ENCODE measurements at regions of chr6 and their contacts with region 1.

Region 1: DNA sequence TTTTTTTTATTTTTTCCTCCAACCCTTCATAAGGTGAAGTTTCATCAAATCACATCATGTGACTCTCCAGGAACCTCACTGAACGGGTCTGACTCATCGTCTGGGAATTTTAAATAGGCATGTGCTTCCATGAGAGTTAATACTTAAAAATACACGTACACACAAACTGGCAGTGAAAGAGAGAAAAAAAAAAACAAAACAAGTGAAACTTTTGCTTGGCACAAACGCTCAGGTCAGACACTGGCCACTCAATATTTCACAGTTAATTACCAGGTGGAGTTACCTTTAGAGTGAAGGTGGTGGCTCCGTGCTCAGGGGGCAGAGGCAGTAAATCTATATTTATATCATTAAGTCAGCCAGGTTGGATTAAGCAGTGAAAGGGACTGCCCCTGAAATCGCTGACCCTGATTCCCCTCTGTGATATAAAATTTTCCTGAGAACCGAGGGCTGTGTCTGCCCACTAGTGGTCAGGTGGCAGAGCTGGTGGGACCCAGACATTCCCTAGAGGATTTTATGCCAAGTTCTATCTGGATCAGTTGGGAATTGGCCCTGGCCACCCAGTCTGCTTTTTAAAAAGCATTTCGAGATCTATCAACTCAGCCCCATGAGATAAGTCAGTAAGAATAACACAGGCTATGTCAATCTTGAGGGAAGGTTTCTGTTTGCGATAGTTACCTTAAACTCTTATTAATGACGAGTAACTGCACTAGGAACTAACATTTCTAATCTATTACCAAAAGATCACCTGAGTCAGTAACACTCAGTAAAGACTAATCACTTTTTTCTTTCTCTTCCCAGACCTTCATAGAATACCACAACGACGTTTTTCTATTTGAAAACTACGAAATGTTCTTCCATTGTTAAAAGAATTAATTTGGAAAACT is 259.1 kb downstream of the HDGFL1 start:
- DNase-seq: peak; percentile 88
- H3K4me3 Mint-ChIP-seq: peak overlapping the region; percentile 48
- H3K27ac Mint-ChIP-seq: peak overlapping the region; percentile 82
- H3K4me1 Mint-ChIP-seq: peaks cover 68% of the 10 kb centered on the region
- H3K27me3 Mint-ChIP-seq: no peaks in the 10 kb centered on the region
- CTCF ChIP-seq: peak; percentile 95

Region 2: GRCh38 chr6:21731411-21732031 is 1096.9 kb before region 1 on chr6:
- CTCF ChIA-PET with region 1: no interaction called
- intact Hi-C with region 1: loop called (anchors 5 kb)
- DNase-seq: peak; percentile 74
- H3K4me3 Mint-ChIP-seq: no peak overlapping the region
- H3K27ac Mint-ChIP-seq: peak overlapping the region; percentile 22
- H3K4me1 Mint-ChIP-seq: peaks cover 62% of the 10 kb centered on the region
- H3K27me3 Mint-ChIP-seq: no peaks in the 10 kb centered on the region
- CTCF ChIP-seq: no peak

Region 3: GRCh38 chr6:21946298-21946783 is 882.1 kb before region 1 on chr6:
- CTCF ChIA-PET with region 1: no interaction called
- intact Hi-C with region 1: loop called (anchors 1 kb)
- DNase-seq: peak; percentile 54
- H3K4me3 Mint-ChIP-seq: no peak overlapping the region
- H3K27ac Mint-ChIP-seq: peak overlapping the region; percentile 79
- H3K4me1 Mint-ChIP-seq: peaks cover 85% of the 10 kb centered on the region
- H3K27me3 Mint-ChIP-seq: no peaks in the 10 kb centered on the region
- CTCF ChIP-seq: no peak

Region 4: DNA sequence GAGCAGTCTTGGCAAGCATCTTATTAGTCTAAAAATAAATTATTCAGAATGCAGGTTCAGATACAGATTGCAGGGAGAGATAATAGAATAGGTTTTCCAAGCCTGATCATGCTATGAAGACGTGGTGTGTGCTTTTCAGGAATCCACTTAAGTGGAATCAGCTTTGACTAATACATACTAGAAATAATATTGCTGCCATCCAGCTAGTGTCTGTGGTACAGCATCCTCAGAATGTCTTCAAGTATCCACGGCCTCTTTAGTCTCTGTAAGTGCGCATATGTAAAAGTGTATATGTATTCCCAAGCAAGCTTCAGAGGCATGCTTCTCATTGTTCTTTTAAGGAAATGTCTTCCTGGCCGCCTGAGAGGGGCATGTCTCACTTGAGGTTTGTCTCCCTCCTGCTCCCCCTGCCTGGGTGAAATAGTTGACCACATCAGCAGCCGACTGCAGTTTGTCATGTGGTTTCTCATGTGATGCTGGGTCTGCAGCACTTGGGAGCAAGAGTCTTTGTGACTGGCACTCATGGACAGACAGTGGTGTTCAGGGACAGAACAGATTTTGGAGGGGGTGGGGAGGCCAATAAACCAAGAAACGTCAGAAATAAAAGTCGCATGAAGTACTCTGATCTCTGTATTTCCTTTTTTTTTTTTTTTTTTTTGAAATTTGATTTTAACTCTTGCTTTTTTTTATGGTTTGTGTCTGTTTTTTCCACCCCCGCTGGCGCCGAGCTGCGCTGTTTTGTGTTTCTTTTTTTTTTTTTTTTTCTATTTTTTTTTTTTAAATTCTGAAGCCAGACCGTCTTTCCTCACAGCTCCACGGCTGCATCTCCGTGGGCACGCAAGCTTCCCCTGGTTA is 682.4 kb before region 1 on chr6:
- CTCF ChIA-PET with region 1: interaction called, 3 read pairs
- intact Hi-C with region 1: loop called (anchors 10 kb)
- DNase-seq: no peak
- H3K4me3 Mint-ChIP-seq: no peak overlapping the region
- H3K27ac Mint-ChIP-seq: no peak overlapping the region
- H3K4me1 Mint-ChIP-seq: peaks cover 20% of the 10 kb centered on the region
- H3K27me3 Mint-ChIP-seq: no peaks in the 10 kb centered on the region
- CTCF ChIP-seq: no peak

Region 5: GRCh38 chr6:22363714-22364239 is 464.6 kb before region 1 on chr6:
- CTCF ChIA-PET with region 1: interaction called, 3 read pairs
- intact Hi-C with region 1: loop called (anchors 10 kb)
- DNase-seq: no peak
- H3K4me3 Mint-ChIP-seq: no peak overlapping the region
- H3K27ac Mint-ChIP-seq: peak overlapping the region; percentile 83
- H3K4me1 Mint-ChIP-seq: peaks cover 26% of the 10 kb centered on the region
- H3K27me3 Mint-ChIP-seq: no peaks in the 10 kb centered on the region
- CTCF ChIP-seq: no peak

Region 6: GRCh38 chr6:22848121-22848520 is 19.7 kb after region 1 on chr6:
- CTCF ChIA-PET with region 1: no interaction called
- intact Hi-C with region 1: no loop called
- DNase-seq: no peak
- H3K4me3 Mint-ChIP-seq: no peak overlapping the region
- H3K27ac Mint-ChIP-seq: no peak overlapping the region
- H3K4me1 Mint-ChIP-seq: no peaks in the 10 kb centered on the region
- H3K27me3 Mint-ChIP-seq: no peaks in the 10 kb centered on the region
- CTCF ChIP-seq: no peak

Region 7: DNA sequence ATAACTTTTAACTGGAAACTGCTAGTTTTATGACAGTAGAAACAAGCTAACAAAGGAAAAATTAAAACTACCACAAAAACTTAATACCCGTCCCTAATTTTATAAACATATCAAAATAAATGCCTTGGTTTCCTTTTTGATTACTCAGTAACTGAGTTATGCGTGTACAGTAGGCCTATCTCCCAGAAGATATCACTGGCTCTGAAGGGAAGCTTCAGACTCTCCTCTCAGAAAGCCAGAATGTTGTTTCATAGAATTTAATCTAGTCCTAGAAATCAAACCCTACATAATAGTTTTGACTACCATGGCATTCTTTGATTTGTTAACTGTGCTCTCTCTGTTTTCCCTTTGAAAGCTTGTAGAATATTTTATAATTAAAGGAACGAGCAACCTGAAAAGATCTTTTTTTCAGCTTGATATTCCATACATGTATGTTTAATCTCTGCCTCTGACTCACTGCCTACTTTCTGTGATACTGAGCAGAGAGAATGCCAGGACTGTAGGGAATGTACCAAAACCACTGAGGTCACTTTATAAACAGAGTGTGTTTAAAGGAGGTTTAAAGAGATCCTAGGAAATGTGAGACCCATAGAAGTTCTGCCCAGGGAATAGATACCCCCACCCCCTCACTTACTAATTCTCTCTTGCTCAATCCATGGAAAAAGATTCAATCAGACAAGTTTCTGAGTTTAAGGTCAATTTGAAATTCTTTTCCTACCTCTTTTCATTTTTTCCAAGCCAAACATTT is 52.4 kb after region 1 on chr6:
- CTCF ChIA-PET with region 1: interaction called, 4 read pairs
- intact Hi-C with region 1: loop called (anchors 2 kb)
- DNase-seq: peak; percentile 51
- H3K4me3 Mint-ChIP-seq: peak overlapping the region; percentile 24
- H3K27ac Mint-ChIP-seq: peak overlapping the region; percentile 95
- H3K4me1 Mint-ChIP-seq: peaks cover 61% of the 10 kb centered on the region
- H3K27me3 Mint-ChIP-seq: no peaks in the 10 kb centered on the region
- CTCF ChIP-seq: no peak

Region 8: GRCh38 chr6:23659125-23659524 is 830.7 kb after region 1 on chr6:
- CTCF ChIA-PET with region 1: no interaction called
- intact Hi-C with region 1: loop called (anchors 5 kb)
- DNase-seq: peak; percentile 66
- H3K4me3 Mint-ChIP-seq: no peak overlapping the region
- H3K27ac Mint-ChIP-seq: no peak overlapping the region
- H3K4me1 Mint-ChIP-seq: peaks cover 26% of the 10 kb centered on the region
- H3K27me3 Mint-ChIP-seq: no peaks in the 10 kb centered on the region
- CTCF ChIP-seq: peak; percentile 63

Measured in Calu3 (cell line).